ENCODE measurements at regions of chr12 and their contacts with region 1.

Region 1: GRCh38 chr12:104201238-104202001 is 14.2 kb upstream of the TXNRD1 start:
- DNase-seq: no peak
- H3K4me3 ChIP-seq: no peak overlapping the region
- H3K27ac ChIP-seq: no peak overlapping the region
- H3K4me1 ChIP-seq: no peaks in the 10 kb centered on the region
- H3K27me3 ChIP-seq: no peaks in the 10 kb centered on the region
- CTCF ChIP-seq: peak; percentile 15 to 78 (median 76)
- POLR2A ChIP-seq: no peak

Region 2: GRCh38 chr12:104358347-104359003 is 157.1 kb after region 1 on chr12:
- intact Hi-C with region 1: loop called (anchors 5 kb)
- DNase-seq: peak in 1 of 2 donors; percentile 41
- H3K4me3 ChIP-seq: no peak overlapping the region
- H3K27ac ChIP-seq: no peak overlapping the region
- H3K4me1 ChIP-seq: no peaks in the 10 kb centered on the region
- H3K27me3 ChIP-seq: no peaks in the 10 kb centered on the region
- CTCF ChIP-seq: peak; percentile 77 to 86 (median 80)
- POLR2A ChIP-seq: no peak

Region 3: DNA sequence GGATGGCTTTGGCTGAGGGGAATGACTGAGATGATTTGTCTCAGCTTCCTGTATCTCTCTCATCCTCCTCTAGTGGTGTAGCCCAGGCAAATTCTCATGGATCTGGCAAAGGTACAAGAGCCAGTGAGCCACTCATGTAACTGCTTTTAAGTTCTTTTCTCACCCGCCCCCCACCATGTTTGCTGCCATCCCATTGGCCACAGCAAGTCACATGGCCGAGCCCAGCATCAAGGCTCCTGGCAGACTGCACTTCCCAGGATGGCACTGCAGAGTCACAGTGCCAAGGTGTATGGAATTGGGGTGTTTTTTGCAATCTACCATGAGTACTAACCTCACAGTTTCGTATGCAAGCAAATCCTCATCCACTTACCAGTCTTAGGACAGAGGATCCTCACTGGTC is 306.3 kb after region 1 on chr12:
- intact Hi-C with region 1: no loop called
- DNase-seq: no peak
- H3K4me3 ChIP-seq: no peak overlapping the region
- H3K27ac ChIP-seq: no peak overlapping the region
- H3K4me1 ChIP-seq: no peaks in the 10 kb centered on the region
- H3K27me3 ChIP-seq: no peaks in the 10 kb centered on the region
- CTCF ChIP-seq: no peak
- POLR2A ChIP-seq: no peak

Region 4: DNA sequence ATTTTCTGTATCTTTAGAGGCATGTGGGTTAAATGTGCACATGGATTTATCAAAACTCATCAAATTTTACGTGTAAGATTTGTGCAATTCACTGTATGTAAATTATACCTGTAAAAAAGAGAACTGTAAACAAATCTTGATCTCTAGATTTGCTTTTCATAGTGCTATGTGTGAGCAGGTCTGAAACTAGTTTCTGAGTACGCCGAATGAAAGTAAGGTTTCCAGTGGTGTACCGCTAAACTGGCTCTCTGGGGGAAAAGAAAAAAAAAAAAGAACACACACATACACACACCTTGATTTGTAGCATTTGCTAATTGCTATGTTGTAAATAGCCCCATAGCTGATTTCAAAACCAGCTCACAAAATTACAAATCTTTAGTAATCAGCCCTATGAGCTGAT is 765.3 kb after region 1 on chr12:
- intact Hi-C with region 1: loop called (anchors 5 kb)
- DNase-seq: no peak
- H3K4me3 ChIP-seq: no peak overlapping the region
- H3K27ac ChIP-seq: no peak overlapping the region
- H3K4me1 ChIP-seq: no peaks in the 10 kb centered on the region
- H3K27me3 ChIP-seq: no peaks in the 10 kb centered on the region
- CTCF ChIP-seq: no peak
- POLR2A ChIP-seq: no peak

Measured in breast epithelium (tissue), 4 donors.